Activated CD4-positive, alpha-beta T cell treated with anti-CD3 and anti-CD28 coated beads for 36 hours (primary cell): ENCODE measurements at regions of chr11 and their contacts with region 1.

Region 1: GRCh38 chr11:118171269-118172062 is 5.0 kb downstream of the SCN2B start:
- DNase-seq: peak; percentile 91
- ATAC-seq: peak; percentile 95
- H3K4me3 Mint-ChIP-seq: no peak overlapping the region
- H3K27ac Mint-ChIP-seq: no peak overlapping the region
- H3K4me1 Mint-ChIP-seq: no peaks in the 10 kb centered on the region
- H3K27me3 Mint-ChIP-seq: peaks cover 6% of the 10 kb centered on the region

Region 2: DNA sequence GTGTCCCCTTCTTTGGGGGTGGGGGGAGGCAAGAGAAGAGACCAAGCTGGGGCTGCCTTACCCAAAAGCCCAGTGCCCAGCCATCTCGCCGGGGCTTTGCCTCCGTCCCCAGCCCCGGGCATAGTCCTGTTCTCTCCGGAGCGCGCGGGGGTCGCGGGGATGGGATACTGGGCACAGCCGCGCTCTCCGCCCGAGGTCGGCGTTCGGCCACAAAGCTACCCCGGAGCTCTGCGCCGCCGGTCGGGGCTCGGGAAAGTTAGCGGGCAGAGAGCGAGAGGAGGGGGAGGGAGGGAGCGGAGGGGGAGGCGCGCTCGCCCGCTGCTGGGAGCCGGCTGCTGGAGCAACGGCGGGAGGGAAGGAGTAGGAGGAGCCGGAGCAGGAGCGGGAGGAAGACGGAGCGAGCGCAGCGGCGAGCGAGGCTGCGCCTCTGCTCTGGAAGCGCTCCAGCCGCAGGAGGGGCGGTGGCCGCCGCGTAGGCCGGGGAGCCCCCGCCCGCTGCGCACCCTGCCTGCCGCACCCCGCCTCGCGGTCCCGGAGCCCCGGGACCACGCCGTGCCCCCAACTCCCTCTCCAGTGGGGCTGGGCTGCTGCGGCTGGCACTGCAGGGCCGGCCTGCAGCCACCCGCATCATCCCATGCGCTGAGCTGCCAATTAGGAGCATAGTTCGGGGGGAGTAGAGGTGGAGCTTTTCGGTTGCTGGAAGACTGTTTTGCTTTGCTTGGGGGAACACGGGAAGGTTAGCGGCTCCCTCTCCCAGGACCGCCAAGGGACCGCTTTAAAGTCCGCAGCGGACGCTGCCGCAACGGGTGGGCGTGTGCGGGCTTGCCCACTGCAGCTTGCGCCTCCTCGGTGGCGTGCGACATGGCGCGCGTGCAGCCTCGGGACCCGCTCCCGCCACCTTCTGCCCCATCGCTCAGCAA is 18.7 kb before region 1 on chr11 and contains the start of gene SCN4B:
- CTCF ChIA-PET with region 1: interaction called, 120 read pairs
- POLR2A ChIA-PET with region 1: interaction called, 3 read pairs
- intact Hi-C with region 1: no loop called
- DNase-seq: peak; percentile 40
- ATAC-seq: peak; percentile 43
- H3K4me3 Mint-ChIP-seq: peak within 1 kb of the TSS; percentile 38
- H3K27ac Mint-ChIP-seq: no peak within 1 kb of the TSS
- H3K4me1 Mint-ChIP-seq: peaks cover 6% of the 10 kb centered on the region
- H3K27me3 Mint-ChIP-seq: peaks cover 54% of the 10 kb centered on the region
- total RNA-seq, gene SCN4B: 0.26 to 0.27 TPM